Calu3 (cell line): ENCODE measurements at regions of chr9 and their contacts with region 1.

Region 1: GRCh38 chr9:98848450-98849149 is 41.1 kb downstream of the GALNT12 start:
- DNase-seq: peak; percentile 90
- H3K4me3 Mint-ChIP-seq: no peak overlapping the region
- H3K27ac Mint-ChIP-seq: peak overlapping the region; percentile 77
- H3K4me1 Mint-ChIP-seq: peaks cover 10% of the 10 kb centered on the region
- H3K27me3 Mint-ChIP-seq: no peaks in the 10 kb centered on the region
- CTCF ChIP-seq: peak; percentile 56

Region 2: GRCh38 chr9:99140685-99141314 is 292.2 kb after region 1 on chr9:
- CTCF ChIA-PET with region 1: interaction called, 3 read pairs
- intact Hi-C with region 1: loop called (anchors 1 kb)
- DNase-seq: peak; percentile 19
- H3K4me3 Mint-ChIP-seq: no peak overlapping the region
- H3K27ac Mint-ChIP-seq: no peak overlapping the region
- H3K4me1 Mint-ChIP-seq: peaks cover 9% of the 10 kb centered on the region
- H3K27me3 Mint-ChIP-seq: no peaks in the 10 kb centered on the region
- CTCF ChIP-seq: peak; percentile 31

Region 3: DNA sequence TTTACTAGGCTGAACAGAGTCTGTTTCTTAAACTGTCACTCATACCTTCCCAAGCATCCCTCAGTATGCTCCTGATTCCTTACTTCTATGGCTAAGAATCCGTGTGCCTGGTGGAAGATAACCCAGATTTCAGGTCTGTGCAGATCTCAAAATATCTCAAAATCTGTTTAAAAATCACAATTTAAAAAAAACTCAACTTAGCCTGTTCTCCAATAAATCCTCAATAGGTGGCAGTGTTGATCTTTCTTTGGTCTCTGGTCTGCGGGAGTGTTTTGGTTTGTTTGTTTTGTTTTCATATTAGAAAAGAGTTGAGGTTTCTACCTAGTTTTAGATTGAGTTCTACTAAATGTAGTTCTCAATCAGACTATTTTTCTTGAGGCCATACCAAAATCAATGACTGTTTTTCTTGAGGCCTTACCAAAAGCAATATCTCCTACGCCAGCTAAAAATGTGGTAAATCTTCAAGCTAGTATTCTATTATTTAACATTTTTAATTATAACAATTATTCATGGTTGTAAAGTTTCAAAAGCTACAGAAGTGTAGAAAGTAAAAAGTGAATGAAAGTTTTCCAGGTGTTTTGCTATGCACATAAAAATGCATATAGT is 314.3 kb after region 1 on chr9:
- CTCF ChIA-PET with region 1: no interaction called
- intact Hi-C with region 1: no loop called
- DNase-seq: no peak
- H3K4me3 Mint-ChIP-seq: no peak overlapping the region
- H3K27ac Mint-ChIP-seq: no peak overlapping the region
- H3K4me1 Mint-ChIP-seq: no peaks in the 10 kb centered on the region
- H3K27me3 Mint-ChIP-seq: peaks cover 5% of the 10 kb centered on the region
- CTCF ChIP-seq: peak; percentile 19